Stomach (tissue), 19 donors: ENCODE measurements at regions of chr22 and their contacts with region 1.

Region 1: GRCh38 chr22:30763815-30764686 is 69.4 kb downstream of the OSBP2 start:
- DNase-seq: peak; percentile 52 to 93
- H3K4me3 ChIP-seq: no peak overlapping the region
- H3K27ac ChIP-seq: no peak overlapping the region
- H3K4me1 ChIP-seq: peaks cover 0 to 7% (median 6%) of the 10 kb centered on the region in 4 donors
- H3K27me3 ChIP-seq: no peaks in the 10 kb centered on the region
- CTCF ChIP-seq: peak in 5 of 7 experiments; percentile 19 to 58 (median 34)
- EP300 ChIP-seq: no peak
- POLR2A ChIP-seq: no peak

Region 2: GRCh38 chr22:30910358-30910757 is 146.3 kb after region 1 on chr22:
- intact Hi-C with region 1: loop called (anchors 10 kb)
- DNase-seq: no peak
- H3K4me3 ChIP-seq: no peak overlapping the region
- H3K27ac ChIP-seq: no peak overlapping the region
- H3K4me1 ChIP-seq: no peaks in the 10 kb centered on the region
- H3K27me3 ChIP-seq: no peaks in the 10 kb centered on the region
- CTCF ChIP-seq: no peak
- EP300 ChIP-seq: no peak
- POLR2A ChIP-seq: no peak